Activated T-helper 1 cell treated with anti-CD3 and anti-CD28 coated beads, Interleukin-12 subunit alpha, Interleukin-12 subunit beta, Interleukin-2, Interleukin-4 antibody, amounts not matched to agents 30 ng/mL and 10 ng/mL and 1 ng/mL, durations not matched to agents 14 hours and 24 hours and 36 hours (primary cell): ENCODE measurements at regions of chr9 and their contacts with region 1.

Region 1: DNA sequence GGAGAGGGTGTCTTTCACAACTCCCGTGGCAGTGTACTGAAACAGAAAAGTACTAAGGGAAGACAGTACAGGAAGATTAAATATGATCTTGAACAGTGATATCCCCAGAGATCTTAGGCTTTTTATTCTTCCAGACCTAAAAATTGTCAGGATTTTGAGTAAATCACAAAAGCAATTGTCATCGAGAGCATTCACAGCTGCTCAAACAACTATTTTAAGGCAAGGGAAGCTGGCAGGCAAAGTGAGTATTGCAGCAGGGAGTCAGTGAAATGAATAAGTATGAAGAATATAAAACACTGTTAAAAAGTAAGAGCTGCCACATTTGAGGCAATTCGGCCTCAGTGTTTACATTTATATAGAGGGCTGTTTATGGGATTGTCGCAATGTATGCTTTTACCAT is 479.0 kb downstream of the CAAP1 start:
- DNase-seq: no peak
- H3K4me3 Mint-ChIP-seq: no peak overlapping the region
- H3K27ac Mint-ChIP-seq: no peak overlapping the region
- H3K4me1 Mint-ChIP-seq: no peaks in the 10 kb centered on the region
- H3K27me3 Mint-ChIP-seq: no peaks in the 10 kb centered on the region

Region 2: DNA sequence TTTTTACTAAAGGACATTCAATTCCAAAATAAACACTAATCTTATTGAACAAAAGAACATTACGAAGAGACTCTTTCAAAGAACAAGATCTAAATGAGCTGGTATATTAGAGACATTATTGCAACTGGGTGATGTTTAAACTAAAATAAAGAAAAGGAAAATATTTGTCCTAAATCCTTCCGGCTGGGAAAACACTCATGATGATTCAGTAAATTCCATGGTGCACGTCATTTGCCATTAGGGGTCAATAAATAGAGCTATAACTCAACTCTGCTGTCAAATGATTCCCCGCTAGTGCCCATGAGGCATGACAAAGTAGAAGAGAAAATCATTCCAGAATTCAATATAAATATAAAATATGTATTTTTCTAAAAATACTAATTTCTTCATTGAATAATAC is 169.9 kb before region 1 on chr9:
- intact Hi-C with region 1: no loop called
- DNase-seq: no peak
- H3K4me3 Mint-ChIP-seq: no peak overlapping the region
- H3K27ac Mint-ChIP-seq: no peak overlapping the region
- H3K4me1 Mint-ChIP-seq: no peaks in the 10 kb centered on the region
- H3K27me3 Mint-ChIP-seq: no peaks in the 10 kb centered on the region

Region 3: GRCh38 chr9:26371236-26371635 is 42.4 kb before region 1 on chr9:
- intact Hi-C with region 1: loop called (anchors 5 kb)
- DNase-seq: no peak
- H3K4me3 Mint-ChIP-seq: no peak overlapping the region
- H3K27ac Mint-ChIP-seq: no peak overlapping the region
- H3K4me1 Mint-ChIP-seq: no peaks in the 10 kb centered on the region
- H3K27me3 Mint-ChIP-seq: no peaks in the 10 kb centered on the region

Region 4: DNA sequence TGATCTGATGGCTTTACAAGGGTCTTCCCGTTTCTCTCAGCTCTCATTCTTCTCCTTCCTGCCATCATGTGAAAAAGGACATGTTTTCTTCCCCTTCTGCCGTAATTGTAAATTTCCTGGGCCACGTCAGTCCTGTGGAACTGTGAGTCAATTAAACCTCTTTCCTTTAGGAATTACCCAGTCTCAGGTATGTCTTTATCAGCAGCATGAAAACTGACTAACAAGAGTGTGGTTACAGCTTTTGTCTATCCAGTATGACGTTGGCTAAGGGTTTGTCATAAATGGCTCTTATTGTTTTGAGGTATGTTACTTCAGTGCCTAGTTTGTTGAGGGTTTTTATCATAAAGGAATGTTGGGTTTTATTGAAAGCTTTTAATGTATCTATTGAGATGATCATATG is 22.6 kb before region 1 on chr9:
- intact Hi-C with region 1: no loop called
- DNase-seq: no peak
- H3K4me3 Mint-ChIP-seq: no peak overlapping the region
- H3K27ac Mint-ChIP-seq: no peak overlapping the region
- H3K4me1 Mint-ChIP-seq: no peaks in the 10 kb centered on the region
- H3K27me3 Mint-ChIP-seq: no peaks in the 10 kb centered on the region

Region 5: DNA sequence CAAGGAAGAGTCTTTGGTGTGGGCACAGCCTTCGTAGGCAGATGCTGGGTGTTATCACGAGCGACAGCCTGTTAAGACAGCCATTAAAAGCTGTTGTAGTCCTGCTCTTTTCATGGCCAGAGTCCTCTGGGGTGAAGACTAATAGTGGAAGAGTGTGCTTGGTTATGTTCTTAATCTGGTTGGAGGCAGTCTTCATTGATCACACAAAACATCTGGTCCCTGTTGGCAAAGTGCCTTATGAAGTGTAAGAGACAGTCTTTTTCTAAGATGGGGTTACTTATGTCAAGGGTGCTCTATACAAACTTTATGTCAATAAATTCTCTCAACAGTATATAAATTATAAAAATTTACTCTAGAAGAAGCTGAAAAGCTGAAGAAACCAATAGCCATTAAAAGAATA is 198.6 kb after region 1 on chr9:
- intact Hi-C with region 1: no loop called
- DNase-seq: no peak
- H3K4me3 Mint-ChIP-seq: no peak overlapping the region
- H3K27ac Mint-ChIP-seq: no peak overlapping the region
- H3K4me1 Mint-ChIP-seq: no peaks in the 10 kb centered on the region
- H3K27me3 Mint-ChIP-seq: peaks cover 2% of the 10 kb centered on the region